Gastrocnemius medialis (tissue), 4 donors: ENCODE measurements at regions of chr12 and their contacts with region 1.

Region 1: DNA sequence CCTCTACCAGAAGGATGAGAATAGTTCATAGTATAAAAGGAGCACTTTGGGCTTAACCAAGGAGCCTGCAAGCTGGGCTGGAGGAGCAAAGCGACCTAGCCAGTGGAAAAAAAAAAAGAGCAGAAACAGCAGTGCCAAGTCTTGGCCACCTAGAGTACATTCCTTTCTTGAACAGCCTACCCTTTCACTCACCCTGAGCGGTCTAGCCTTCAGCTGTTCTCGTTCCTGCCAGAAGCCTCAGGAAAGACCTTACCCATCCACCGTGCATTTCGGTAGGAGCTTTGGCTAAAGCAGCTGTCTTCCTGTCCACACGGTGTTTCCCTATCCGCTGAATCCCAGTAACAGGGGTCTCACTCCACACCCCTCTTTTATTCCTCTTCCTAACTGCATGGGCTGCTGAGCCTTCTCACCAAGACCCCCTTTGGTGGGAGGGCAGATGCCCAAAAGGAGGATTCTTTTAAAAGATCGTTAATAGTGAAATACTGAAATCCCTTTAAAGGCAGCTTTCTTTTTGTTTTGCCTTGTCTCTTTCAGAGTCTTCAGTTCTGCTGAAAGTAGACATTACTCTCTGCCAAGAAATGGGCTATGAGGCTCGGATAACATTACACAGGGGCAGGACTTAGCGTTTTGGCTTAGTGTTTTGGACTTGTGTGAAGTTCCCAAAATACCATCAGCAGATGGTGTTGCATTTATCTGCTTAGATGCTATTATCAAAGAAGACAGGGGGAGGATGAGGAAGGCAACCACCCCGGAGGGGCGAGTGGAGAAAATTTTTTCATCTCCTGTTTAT is 88.5 kb upstream of the METAP2 start:
- DNase-seq: peak; percentile 64 to 76
- ATAC-seq: peak; percentile 99
- H3K4me3 ChIP-seq: peak overlapping the region; percentile 55 to 67 (median 58)
- H3K27ac ChIP-seq: peak overlapping the region; percentile 83 to 92 (median 87)
- H3K4me1 ChIP-seq: peaks cover 23 to 26% of the 10 kb centered on the region in 2 donors
- H3K27me3 ChIP-seq: no peaks in the 10 kb centered on the region
- CTCF ChIP-seq: peak in 1 of 5 experiments; percentile 22
- POLR2A ChIP-seq: no peak

Region 2: DNA sequence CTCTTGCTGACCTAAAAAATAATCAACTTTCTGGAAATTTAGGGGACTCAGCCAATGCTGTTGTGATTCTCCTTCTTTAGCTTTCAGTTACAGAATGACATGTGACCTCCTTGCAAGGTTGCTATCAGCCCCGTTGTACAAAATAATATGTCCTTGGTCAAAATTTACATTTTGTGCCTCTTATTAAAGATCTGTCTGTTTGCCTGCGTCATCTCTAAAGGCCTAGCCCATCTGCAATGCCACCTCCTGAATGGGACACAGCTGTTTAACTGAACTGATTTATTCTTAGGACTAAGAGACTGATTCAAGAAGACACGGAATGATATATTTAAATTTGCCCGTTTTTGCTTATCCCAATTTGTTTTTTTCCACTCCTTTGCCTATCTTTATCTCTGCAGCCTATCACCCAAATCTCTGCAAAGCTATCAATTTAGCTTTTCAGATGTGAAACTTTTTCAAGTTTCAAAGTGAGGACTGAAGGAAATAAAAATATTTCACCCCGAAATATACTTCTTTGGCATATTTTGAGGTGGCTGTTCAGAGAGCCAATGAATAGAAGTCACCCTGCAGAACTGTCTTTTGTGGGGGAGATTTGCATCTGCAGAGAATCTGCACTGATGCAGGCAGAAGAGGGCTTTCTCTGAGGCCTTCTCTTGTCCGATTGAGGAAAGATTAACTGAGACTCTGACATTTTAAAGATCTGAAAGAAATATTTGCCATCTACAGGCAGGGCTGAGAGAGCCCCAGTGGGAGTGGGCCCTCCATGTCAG is 41.8 kb before region 1 on chr12:
- in situ Hi-C with region 1: no loop called
- intact Hi-C with region 1: loop called (anchors 5 kb)
- DNase-seq: no peak
- ATAC-seq: no peak
- H3K4me3 ChIP-seq: no peak overlapping the region
- H3K27ac ChIP-seq: no peak overlapping the region
- H3K4me1 ChIP-seq: peaks cover 0 to 7% of the 10 kb centered on the region in 2 donors
- H3K27me3 ChIP-seq: no peaks in the 10 kb centered on the region
- CTCF ChIP-seq: no peak
- POLR2A ChIP-seq: no peak

Region 3: DNA sequence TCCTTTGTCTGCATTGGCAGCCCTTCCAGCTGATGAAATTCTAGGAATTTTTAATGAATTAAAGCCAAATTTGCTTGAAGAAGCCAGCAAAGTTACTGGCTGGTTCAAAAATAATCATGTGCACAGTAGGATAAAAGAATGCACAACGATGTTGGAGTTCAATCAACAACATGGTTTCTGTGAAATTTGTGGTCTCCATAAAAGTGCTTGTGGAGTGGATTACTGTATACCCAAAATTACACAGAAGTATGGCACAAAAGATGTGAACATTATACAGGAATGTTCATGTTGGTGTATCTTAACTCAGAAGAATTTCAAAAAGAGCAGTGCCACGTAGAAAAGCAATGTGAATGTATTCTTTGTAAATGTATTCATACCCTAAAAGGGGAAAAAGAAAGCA is 16.5 kb before region 1 on chr12:
- in situ Hi-C with region 1: no loop called
- intact Hi-C with region 1: no loop called
- DNase-seq: no peak
- ATAC-seq: no peak
- H3K4me3 ChIP-seq: no peak overlapping the region
- H3K27ac ChIP-seq: no peak overlapping the region
- H3K4me1 ChIP-seq: no peaks in the 10 kb centered on the region
- H3K27me3 ChIP-seq: no peaks in the 10 kb centered on the region
- CTCF ChIP-seq: no peak
- POLR2A ChIP-seq: no peak

Region 4: GRCh38 chr12:95460896-95461661 is 75.6 kb after region 1 on chr12:
- in situ Hi-C with region 1: no loop called
- intact Hi-C with region 1: no loop called
- DNase-seq: no peak
- ATAC-seq: no peak
- H3K4me3 ChIP-seq: no peak overlapping the region
- H3K27ac ChIP-seq: no peak overlapping the region
- H3K4me1 ChIP-seq: no peaks in the 10 kb centered on the region
- H3K27me3 ChIP-seq: no peaks in the 10 kb centered on the region
- CTCF ChIP-seq: no peak
- POLR2A ChIP-seq: no peak